Psoas muscle (tissue), 8 donors: ENCODE measurements at regions of chr5 and their contacts with region 1.

Region 1: GRCh38 chr5:52620315-52620714 is 167.4 kb upstream of the ITGA1 start:
- DNase-seq: no peak
- ATAC-seq: no peak
- H3K4me3 ChIP-seq: no peak overlapping the region
- H3K27ac ChIP-seq: no peak overlapping the region
- H3K4me1 ChIP-seq: no peaks in the 10 kb centered on the region
- H3K27me3 ChIP-seq: no peaks in the 10 kb centered on the region
- CTCF ChIP-seq: no peak

Region 2: DNA sequence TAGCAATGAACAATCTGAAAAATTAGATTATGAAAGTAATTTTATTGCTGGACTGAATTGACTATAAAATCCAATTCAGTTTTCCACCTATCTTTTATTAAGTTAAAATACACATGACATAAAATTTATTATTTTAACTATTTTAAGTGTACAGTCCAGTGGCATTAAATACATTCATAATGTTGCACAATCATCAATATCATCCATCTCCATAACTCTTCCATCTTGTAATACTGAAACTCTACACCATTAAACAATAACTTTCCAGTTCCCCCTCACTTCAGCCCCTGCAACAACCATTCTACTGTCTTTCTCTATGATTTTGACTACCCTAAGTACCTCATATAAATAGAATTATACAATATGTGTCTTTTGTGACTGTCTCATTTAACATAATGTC is 33.2 kb before region 1 on chr5:
- intact Hi-C with region 1: loop called in 1 of 2 experiments (anchors 1 kb)
- DNase-seq: no peak
- ATAC-seq: no peak
- H3K4me3 ChIP-seq: no peak overlapping the region
- H3K27ac ChIP-seq: no peak overlapping the region
- H3K4me1 ChIP-seq: no peaks in the 10 kb centered on the region
- H3K27me3 ChIP-seq: no peaks in the 10 kb centered on the region
- CTCF ChIP-seq: no peak

Region 3: GRCh38 chr5:52632281-52632680 is 12.0 kb after region 1 on chr5:
- intact Hi-C with region 1: no loop called
- DNase-seq: no peak
- ATAC-seq: no peak
- H3K4me3 ChIP-seq: no peak overlapping the region
- H3K27ac ChIP-seq: no peak overlapping the region
- H3K4me1 ChIP-seq: no peaks in the 10 kb centered on the region
- H3K27me3 ChIP-seq: no peaks in the 10 kb centered on the region
- CTCF ChIP-seq: no peak

Region 4: GRCh38 chr5:52961274-52961681 is 341.0 kb after region 1 on chr5:
- intact Hi-C with region 1: no loop called
- DNase-seq: no peak
- ATAC-seq: no peak
- H3K4me3 ChIP-seq: no peak overlapping the region
- H3K27ac ChIP-seq: no peak overlapping the region
- H3K4me1 ChIP-seq: no peaks in the 10 kb centered on the region
- H3K27me3 ChIP-seq: no peaks in the 10 kb centered on the region
- CTCF ChIP-seq: no peak